Activated naive CD4-positive, alpha-beta T cell treated with anti-CD3 and anti-CD28 coated beads, Interleukin-2, amount 10 ng/mL, durations not matched to agents 7 days and 5 days (primary cell): ENCODE measurements at regions of chr1 and their contacts with region 1.

Region 1: GRCh38 chr1:47710329-47711071 is 272.7 kb downstream of the FOXD2 start:
- DNase-seq: peak; percentile 77
- H3K4me3 Mint-ChIP-seq: no peak overlapping the region
- H3K27ac Mint-ChIP-seq: no peak overlapping the region
- H3K4me1 Mint-ChIP-seq: peaks cover 8% of the 10 kb centered on the region
- H3K27me3 Mint-ChIP-seq: peaks cover 93% of the 10 kb centered on the region

Region 2: GRCh38 chr1:47437447-47438164 is 272.9 kb before region 1 on chr1 and contains the start of gene FOXD2:
- CTCF ChIA-PET with region 1: interaction called, 22 read pairs
- DNase-seq: peak; percentile 91
- H3K4me3 Mint-ChIP-seq: peak within 1 kb of the TSS; percentile 93
- H3K27ac Mint-ChIP-seq: peak within 1 kb of the TSS; percentile 86
- H3K4me1 Mint-ChIP-seq: peaks cover 34% of the 10 kb centered on the region
- H3K27me3 Mint-ChIP-seq: peaks cover 49% of the 10 kb centered on the region

Region 3: GRCh38 chr1:47627471-47628370 is 82.8 kb before region 1 on chr1:
- CTCF ChIA-PET with region 1: no interaction called
- DNase-seq: no peak
- H3K4me3 Mint-ChIP-seq: no peak overlapping the region
- H3K27ac Mint-ChIP-seq: no peak overlapping the region
- H3K4me1 Mint-ChIP-seq: no peaks in the 10 kb centered on the region
- H3K27me3 Mint-ChIP-seq: peaks cover 13% of the 10 kb centered on the region